Posterior cingulate gyrus (tissue), 11 donors: ENCODE measurements at regions of chr5 and their contacts with region 1.

Region 1: DNA sequence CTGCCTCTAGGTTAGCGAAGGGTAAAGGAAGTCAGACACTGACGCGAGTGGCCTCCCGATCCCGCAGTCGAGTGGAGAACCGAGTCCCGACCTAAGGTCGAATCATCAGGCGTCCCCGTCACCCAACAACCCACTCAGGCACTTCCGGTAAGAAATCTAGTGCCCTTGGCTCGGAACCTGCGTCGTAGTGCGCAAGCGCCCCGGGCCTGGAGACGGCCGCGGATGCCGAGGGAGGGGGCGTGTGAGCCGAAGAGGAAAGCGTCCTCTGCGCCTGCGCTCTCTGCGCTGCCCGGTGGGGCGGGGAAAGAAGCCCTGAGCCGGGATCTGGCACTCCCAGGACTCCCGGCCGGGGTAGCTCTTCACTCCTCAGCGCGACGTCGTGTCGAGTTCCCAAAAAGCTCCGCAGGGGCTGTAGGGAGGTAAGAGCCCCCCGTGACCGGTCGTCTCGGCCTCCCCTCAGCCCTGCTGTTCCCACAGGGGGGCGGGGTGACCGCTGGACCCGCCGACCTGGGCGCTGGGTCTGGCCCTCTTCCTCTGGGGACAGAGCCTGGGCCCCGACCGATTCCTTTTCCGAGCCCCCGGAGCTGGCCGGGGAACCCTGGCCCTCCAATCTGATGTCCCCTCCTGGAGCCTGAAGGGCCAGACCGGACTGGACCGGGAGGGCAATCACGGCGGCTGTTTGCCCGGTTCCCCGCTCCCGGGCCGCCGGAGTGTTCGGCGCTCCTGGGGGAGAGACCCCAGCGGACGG is at the start of gene ZFYVE16:
- DNase-seq: peak; percentile 95 to 100 (median 98)

Region 2: GRCh38 chr5:80093796-80094195 is 314.1 kb before region 1 on chr5:
- intact Hi-C with region 1: loop called (anchors 10 kb)
- DNase-seq: no peak

Region 3: DNA sequence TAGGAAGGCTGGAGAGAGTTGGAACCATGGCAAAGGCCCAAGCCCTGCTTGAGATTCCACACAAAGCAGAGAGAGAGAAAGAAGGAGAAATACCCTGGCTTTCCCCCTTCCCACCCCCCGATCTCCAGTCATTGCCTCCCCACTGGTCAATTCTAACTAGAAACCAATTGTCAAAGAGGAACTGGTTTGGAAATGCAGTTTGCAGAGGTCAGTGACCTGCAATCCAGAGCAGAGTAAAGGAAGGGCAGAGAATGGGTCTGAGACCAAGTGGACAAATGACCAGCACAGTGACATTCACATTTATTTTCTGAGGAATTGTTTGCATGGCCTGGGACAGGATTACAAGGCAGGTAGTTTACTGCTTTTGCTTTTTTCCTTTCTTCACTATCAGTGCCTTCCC is 37.5 kb before region 1 on chr5:
- intact Hi-C with region 1: loop called (anchors 5 kb)
- DNase-seq: no peak

Region 4: GRCh38 chr5:80487829-80488721 is 80.2 kb after region 1 on chr5 and contains the start of gene FAM151B:
- intact Hi-C with region 1: loop called (anchors 10 kb)
- DNase-seq: peak; percentile 68 to 98 (median 85)

Region 5: DNA sequence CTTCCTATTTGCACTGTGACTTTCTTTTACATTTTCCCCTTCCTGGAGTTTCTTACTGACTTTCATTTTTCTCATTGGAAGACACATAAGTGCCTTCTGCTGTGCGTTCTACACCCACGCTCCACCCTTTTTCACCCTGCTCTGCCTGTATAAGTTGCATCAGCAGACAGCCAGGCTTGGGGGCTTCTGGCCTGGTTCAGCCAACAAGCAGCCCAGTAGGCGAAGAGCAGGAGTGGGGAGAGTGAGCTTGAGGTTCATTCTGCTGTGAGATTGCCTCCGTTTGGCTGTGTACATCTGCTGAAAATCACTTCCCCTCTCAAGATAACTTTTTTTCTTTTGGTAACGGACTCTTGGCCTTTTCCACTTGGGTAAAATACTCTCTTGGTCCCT is 590.7 kb after region 1 on chr5:
- intact Hi-C with region 1: no loop called
- DNase-seq: no peak

Region 6: DNA sequence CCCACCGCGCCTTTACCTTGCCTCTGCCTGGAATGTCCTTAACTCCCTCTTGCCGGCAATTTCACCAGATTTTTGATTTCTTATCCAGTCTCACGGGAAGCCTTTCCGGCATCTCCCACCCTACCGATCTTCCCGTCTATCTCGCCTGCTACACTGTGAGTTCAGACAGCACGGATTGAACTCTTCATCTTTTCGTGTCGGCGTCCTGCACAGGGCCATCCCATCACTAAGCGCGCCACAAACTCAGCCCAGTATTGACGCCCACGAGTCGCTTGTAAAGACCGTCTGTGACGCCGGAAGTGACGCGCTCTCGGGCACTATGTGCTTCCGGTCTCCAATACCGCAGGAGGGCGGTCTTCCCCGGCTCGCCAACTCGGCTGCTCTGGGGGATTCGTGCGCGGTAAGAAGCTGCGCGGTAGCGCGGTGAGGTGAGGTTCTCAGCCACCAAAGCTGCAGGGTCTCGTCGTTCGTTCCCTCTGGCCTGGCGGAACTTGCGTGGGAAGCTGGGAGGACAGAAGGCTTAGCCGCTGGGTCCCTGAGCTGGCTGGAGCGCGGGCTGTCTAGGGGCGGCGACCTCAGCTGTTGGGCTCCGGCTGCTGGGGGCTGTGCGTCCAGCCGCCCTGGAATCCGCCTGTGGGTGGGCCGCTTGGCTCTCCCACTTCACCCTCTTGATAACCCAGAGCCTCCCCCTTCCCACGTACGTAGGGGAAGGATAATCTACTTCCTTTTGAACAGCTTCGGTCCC is 893.5 kb after region 1 on chr5 and contains the start of gene ZCCHC9:
- intact Hi-C with region 1: loop called (anchors 10 kb)
- DNase-seq: peak; percentile 88 to 99 (median 92)